Aorta (tissue), 5 donors: ENCODE measurements at regions of chr2 and their contacts with region 1.

Region 1: GRCh38 chr2:43611987-43612894 is 16.4 kb upstream of the THADA start:
- DNase-seq: peak; percentile 65 to 84
- ATAC-seq: peak; percentile 94
- H3K4me3 ChIP-seq: no peak overlapping the region
- H3K27ac ChIP-seq: no peak overlapping the region
- H3K4me1 ChIP-seq: peaks cover 0 to 2% of the 10 kb centered on the region in 2 donors
- H3K27me3 ChIP-seq: no peaks in the 10 kb centered on the region

Region 2: DNA sequence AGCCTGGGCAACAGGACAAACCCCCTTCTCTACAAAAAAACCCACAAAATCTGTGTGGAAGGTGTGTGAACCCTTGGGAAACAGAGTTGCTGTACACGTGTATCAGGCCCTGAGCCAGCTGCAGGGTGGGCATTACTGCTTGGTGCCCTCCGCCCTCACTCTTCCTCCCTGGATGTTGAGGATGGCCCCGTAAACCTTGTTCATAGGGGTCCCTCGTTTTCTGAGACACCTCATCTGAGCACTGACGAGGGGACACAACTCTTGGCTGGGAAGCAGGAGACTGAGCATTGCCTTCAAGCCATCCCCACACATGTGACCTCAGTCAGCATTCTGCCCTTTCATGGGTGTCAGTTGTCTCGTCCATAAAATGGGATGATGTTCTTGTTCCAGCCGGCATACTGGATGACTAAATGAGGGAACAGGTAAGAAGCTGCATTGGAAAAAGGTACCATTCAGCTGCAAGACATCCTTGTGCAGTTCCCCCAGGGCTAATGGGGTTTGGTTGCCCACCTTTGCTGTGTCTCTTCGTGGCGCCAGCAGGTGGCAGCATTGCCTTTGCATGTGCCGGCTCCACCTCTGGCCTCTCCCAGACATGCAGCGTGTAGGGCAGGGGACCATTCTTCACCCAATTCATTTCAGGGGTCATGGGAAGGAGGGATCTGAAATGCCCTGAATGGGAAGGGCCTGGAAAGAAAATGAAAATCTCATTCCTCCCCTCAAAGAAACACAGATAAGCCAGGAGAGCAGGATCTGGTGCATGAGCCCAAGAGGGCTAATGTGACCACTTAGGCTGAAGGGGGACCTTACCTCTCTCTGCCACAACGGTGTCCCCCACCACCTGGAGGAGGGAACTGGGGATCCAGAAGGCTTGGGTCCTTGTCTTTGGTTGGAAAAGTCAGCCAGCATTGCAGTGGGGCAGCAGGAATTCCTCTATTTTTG is 783.5 kb before region 1 on chr2:
- intact Hi-C with region 1: loop called in 1 of 2 experiments (anchors 2 kb)
- DNase-seq: peak; percentile 84 to 90
- ATAC-seq: peak; percentile 94
- H3K4me3 ChIP-seq: no peak overlapping the region
- H3K27ac ChIP-seq: no peak overlapping the region
- H3K4me1 ChIP-seq: no peaks in the 10 kb centered on the region
- H3K27me3 ChIP-seq: no peaks in the 10 kb centered on the region

Region 3: DNA sequence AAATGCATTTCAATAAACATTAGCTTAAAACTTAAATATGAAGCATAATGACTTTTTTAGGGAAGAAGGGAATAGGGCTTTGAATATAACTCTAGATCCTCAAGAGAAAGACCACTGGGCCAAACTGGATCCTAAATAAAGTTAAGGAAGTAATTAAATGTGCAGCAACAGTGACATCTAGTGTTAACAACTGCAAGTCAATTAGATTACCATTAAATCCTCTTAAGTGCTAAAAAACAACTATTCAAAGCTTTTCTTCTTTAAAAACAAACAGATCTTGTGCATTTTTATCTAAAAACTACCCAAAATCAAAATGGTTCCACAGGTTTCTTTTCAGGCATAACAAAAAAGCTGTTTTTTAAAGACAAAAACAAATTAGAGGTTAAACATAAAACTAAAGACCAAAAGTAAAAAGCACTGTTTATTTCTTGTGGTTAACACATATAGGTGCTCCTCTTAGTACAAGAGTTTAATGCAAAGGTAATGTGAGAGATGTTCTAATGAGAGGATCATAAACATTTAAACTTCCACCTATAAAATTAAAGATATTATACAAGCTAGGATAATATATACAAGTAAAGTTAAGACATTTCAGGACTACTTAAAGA is 127.8 kb before region 1 on chr2:
- intact Hi-C with region 1: no loop called
- DNase-seq: no peak
- ATAC-seq: peak; percentile 79
- H3K4me3 ChIP-seq: no peak overlapping the region
- H3K27ac ChIP-seq: no peak overlapping the region
- H3K4me1 ChIP-seq: peaks cover 0 to 8% of the 10 kb centered on the region in 2 donors
- H3K27me3 ChIP-seq: no peaks in the 10 kb centered on the region

Region 4: DNA sequence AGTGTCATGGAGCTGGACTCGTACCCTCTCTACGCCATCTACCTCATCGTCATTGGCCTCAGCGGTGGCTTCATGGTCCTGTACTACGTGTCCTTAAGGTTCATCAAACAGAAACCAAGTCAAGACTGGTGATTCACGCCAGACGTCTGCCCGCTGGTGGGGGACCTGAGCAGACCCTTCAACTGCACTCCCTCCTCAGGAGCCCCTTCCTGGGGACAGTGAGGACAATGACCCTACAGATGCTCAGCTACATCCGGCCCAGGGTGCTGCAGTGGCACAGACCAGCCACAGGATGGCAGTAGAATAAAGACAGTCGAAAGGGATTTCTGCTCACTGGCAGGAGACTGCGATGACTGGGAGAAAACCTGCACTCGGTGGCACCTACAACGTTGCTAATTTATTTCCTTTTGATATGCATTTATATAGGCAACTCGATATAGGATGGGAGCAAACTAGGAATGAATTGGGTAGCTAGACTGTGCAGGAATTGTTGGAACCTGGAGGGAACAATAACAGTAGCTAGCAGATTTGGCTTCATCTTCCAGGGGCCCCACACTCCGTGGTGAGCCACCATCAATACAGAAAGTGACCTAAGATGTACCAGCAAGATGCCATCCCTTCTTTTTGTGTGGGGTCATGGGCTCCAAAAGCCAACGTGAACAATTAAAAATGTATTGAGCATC is 265.7 kb after region 1 on chr2:
- intact Hi-C with region 1: loop called in 1 of 2 experiments (anchors 5 kb)
- DNase-seq: peak; percentile 61 to 79
- ATAC-seq: peak; percentile 73
- H3K4me3 ChIP-seq: no peak overlapping the region
- H3K27ac ChIP-seq: no peak overlapping the region
- H3K4me1 ChIP-seq: no peaks in the 10 kb centered on the region
- H3K27me3 ChIP-seq: no peaks in the 10 kb centered on the region

Region 5: DNA sequence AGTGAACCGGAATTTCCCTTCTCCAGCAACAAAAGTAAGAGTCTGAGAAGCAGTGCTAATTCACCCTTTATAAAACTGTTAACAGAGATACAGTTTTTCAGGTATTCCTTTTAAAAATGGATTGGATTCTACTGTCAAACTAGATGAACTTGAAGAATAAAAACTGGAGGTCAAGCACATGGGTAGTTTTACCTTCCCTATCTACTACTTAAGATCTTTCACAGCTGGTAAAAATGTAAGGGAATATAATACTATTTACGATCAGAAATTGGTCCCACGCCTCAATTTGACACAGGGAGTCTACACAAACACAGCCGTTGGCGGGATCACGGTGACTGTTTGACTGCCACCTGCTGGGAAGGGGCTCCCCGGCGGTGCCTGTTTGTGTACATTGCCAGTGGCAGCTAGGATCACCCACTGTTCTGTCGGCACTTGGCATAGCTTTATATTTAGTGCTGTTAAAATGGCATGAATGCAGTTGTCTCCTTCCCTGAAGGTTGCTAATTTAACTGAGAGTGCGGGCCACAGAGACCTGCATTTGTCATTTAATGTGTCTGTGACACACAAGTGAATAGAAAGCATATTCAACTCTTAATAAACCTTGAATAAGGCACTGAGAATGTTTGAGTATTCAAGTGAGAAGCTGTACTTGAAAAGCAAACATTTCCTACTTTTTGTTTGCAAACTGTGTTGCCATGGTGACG is 286.0 kb after region 1 on chr2:
- intact Hi-C with region 1: loop called in 1 of 2 experiments (anchors 10 kb)
- DNase-seq: no peak
- ATAC-seq: no peak
- H3K4me3 ChIP-seq: no peak overlapping the region
- H3K27ac ChIP-seq: no peak overlapping the region
- H3K4me1 ChIP-seq: no peaks in the 10 kb centered on the region
- H3K27me3 ChIP-seq: no peaks in the 10 kb centered on the region